ENCODE measurements at regions of chr1 and their contacts with region 1.

Region 1: DNA sequence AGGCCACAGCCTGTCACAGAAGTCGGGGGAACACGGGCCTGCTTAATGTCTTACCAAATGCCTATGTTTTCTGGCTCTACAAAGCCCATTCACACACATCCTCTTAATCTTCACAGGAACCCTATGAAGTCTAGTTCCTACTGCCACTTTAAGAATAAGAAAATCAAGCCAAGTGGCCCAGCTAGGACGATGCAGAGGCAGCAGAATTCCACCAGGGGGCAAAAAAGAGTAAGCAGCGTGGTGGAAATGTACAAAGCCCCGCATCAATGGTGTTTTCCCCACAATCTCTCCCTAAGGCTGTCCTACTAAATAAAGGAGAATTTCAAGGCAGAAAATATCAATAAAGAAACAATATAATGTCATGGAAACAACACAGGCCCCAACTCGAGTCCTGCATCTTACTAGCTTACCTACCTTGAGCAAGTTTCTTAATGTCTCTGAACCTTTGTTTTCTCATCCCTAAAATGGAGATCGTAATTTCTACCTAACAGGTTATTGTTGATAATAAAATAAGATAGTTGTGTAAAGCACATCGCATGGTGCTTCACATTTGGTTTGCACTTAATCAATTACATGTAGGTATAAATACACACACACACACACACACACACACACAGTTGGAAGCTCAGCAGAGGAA is 21.4 kb downstream of the SEC16B start:
- DNase-seq: peak; percentile 60 to 63
- H3K4me3 ChIP-seq: no peak overlapping the region
- H3K27ac ChIP-seq: no peak overlapping the region
- H3K4me1 ChIP-seq: no peaks in the 10 kb centered on the region
- H3K27me3 ChIP-seq: no peaks in the 10 kb centered on the region
- CTCF ChIP-seq: peak; percentile 94

Region 2: GRCh38 chr1:176374967-176375569 is 1573.4 kb before region 1 on chr1:
- CTCF ChIA-PET with region 1: no interaction called
- POLR2A ChIA-PET with region 1: no interaction called
- intact Hi-C with region 1: loop called (anchors 5 kb)
- DNase-seq: peak; percentile 42 to 59
- H3K4me3 ChIP-seq: no peak overlapping the region
- H3K27ac ChIP-seq: no peak overlapping the region
- H3K4me1 ChIP-seq: no peaks in the 10 kb centered on the region
- H3K27me3 ChIP-seq: peaks cover 6% of the 10 kb centered on the region
- CTCF ChIP-seq: peak; percentile 89

Region 3: GRCh38 chr1:177780096-177780700 is 168.3 kb before region 1 on chr1:
- CTCF ChIA-PET with region 1: no interaction called
- POLR2A ChIA-PET with region 1: no interaction called
- intact Hi-C with region 1: loop called (anchors 10 kb)
- DNase-seq: peak in 1 of 2 experiments; percentile 47
- H3K4me3 ChIP-seq: no peak overlapping the region
- H3K27ac ChIP-seq: no peak overlapping the region
- H3K4me1 ChIP-seq: no peaks in the 10 kb centered on the region
- H3K27me3 ChIP-seq: peaks cover 14% of the 10 kb centered on the region; the same call in 1 of the 2 replicates
- CTCF ChIP-seq: peak; percentile 67

Region 4: GRCh38 chr1:177964322-177964721 is 15.9 kb after region 1 on chr1:
- CTCF ChIA-PET with region 1: no interaction called
- POLR2A ChIA-PET with region 1: no interaction called
- intact Hi-C with region 1: no loop called
- DNase-seq: no peak
- H3K4me3 ChIP-seq: no peak overlapping the region
- H3K27ac ChIP-seq: no peak overlapping the region
- H3K4me1 ChIP-seq: no peaks in the 10 kb centered on the region
- H3K27me3 ChIP-seq: no peaks in the 10 kb centered on the region
- CTCF ChIP-seq: no peak

Region 5: GRCh38 chr1:178300352-178300699 is 351.9 kb after region 1 on chr1:
- CTCF ChIA-PET with region 1: no interaction called
- POLR2A ChIA-PET with region 1: no interaction called
- intact Hi-C with region 1: loop called (anchors 5 kb)
- DNase-seq: no peak
- H3K4me3 ChIP-seq: no peak overlapping the region
- H3K27ac ChIP-seq: no peak overlapping the region
- H3K4me1 ChIP-seq: peaks cover 9% of the 10 kb centered on the region; the same call in 1 of the 2 replicates
- H3K27me3 ChIP-seq: no peaks in the 10 kb centered on the region
- CTCF ChIP-seq: no peak

Region 6: DNA sequence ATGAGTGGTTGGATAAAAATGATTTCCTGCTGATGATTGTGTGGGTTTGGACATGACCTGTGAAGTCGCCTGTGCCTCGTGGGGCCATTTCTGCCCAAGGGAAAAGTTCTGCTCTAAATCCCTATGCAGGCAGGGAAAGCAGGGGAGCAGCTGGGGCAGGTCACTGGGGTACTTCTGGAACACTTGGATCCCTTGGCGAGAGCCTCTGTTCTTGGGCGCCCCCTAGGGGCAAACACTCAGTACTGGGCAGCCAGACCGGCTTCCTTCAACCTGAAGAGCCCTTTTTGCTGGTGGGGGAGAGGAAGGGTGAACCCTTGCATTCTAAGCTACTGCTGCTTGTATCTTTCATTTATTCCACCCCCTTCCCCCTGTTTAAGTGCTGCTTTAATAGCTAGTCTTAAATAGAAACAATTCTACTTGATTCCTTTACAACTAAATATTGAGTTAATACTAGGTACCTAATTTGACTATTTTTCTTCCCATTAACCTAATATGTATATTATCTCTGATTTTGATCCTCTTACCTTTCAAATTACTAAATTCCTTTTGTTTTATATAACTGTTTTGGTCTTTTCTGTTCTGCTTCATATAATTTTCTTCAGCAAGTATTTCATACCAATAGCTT is 553.4 kb after region 1 on chr1:
- CTCF ChIA-PET with region 1: no interaction called
- POLR2A ChIA-PET with region 1: no interaction called
- intact Hi-C with region 1: loop called (anchors 10 kb)
- DNase-seq: peak; percentile 46 to 53
- H3K4me3 ChIP-seq: no peak overlapping the region
- H3K27ac ChIP-seq: no peak overlapping the region
- H3K4me1 ChIP-seq: no peaks in the 10 kb centered on the region
- H3K27me3 ChIP-seq: no peaks in the 10 kb centered on the region
- CTCF ChIP-seq: peak; percentile 89